ENCODE measurements at regions of chr19 and their contacts with region 1.

Region 1: GRCh38 chr19:48255376-48256303 is at the start of gene CARD8:
- DNase-seq: peak; percentile 49 to 95 (median 78)

Region 2: DNA sequence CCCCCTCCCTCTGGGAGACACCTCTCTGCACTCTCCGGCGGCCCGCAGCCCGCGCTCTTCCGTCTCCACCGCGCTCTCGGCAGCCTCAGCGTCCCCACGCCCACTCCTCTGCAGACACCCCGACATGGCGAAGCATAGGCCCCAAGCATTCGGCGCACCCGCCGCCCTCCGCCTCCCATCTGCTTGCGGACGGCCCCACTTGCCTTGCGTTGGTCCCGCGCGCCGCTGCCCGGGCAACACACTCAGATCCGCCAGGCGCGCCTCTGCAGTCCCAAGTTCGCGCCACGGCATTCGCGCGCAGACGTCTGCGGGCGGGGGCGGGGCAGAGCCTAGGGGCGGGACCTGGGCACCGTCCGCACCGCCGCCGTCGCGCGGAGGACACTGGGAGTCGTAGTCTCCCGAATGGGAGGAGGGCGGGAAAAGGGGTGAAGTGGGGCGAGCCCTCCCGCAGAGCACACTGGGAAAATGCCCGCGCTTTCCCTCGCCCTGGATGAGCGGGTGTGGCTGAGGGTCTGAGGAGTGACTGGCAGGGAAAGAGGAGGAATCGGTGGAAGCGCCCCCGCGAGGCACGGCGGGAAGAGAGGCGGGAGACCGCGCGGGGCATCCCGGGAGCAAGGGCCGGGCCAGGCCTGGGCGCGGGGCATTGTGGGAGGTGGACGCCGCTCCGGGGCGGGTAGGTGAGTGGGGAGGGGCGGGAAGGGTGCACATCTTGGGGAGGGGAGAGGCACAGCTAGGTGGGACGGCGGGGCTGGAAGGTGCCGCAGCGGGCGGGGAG is 85.4 kb before region 1 on chr19 and contains the starts of genes LIG1 and ZSWIM9:
- intact Hi-C with region 1: loop called (anchors 10 kb)
- DNase-seq: peak; percentile 91 to 99 (median 93)

Region 3: DNA sequence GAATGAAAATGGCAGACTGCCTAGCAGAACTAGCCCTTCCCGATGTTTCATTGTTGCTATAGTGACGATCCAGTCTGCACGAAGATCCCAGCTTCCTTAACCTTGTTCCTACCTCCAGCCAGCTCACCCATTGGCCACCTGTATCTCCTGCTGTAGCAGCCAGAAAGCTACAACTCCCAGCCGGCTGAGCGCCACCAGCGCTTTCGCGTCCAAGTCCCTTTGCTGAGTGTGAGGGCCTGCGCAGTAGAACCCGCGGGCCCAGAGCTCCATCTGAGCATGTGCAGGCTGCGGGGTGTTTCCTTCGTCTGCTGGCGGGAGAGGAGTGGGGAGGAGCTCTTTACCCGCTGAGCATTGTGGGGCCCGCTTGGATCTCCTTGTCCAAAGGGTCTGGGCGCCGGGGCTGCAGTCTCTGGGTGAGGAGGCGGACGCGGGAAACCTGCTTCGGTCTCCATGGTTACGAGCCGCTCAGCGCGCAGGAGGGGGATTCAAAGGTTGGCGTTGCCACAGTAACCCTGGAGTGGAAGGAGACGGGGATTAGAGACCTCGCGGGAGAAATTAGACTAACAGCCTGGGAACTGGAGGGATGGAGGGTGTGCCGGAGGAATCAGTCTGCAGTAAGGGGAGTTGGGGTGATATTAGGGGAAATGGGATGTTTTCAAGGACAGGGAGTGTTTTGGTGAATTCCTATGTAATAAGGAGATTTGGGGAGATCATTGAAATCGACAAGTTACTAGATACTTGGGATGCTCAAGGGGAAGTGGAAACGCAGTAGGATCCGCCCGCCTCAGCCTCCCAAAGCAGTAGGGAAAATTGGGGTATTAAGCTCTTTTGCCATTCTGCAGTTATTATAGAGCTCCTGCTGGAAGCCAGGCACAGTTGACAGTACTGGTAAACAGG is 51.7 kb before region 1 on chr19:
- intact Hi-C with region 1: loop called (anchors 10 kb)
- DNase-seq: peak; percentile 93 to 99 (median 96)

Region 4: GRCh38 chr19:48271531-48272151 is 16.0 kb after region 1 on chr19:
- intact Hi-C with region 1: no loop called
- DNase-seq: peak in 7 of 10 donors; percentile 20 to 89 (median 41)

Region 5: GRCh38 chr19:48321622-48322591 is 66.3 kb after region 1 on chr19:
- intact Hi-C with region 1: no loop called
- DNase-seq: peak; percentile 93 to 100 (median 96)

Region 6: GRCh38 chr19:48530066-48530720 is 274.6 kb after region 1 on chr19:
- intact Hi-C with region 1: no loop called
- DNase-seq: peak in 2 of 10 donors; percentile 59 to 62

Measured in posterior cingulate gyrus (tissue), 11 donors.